BJ (cell line): ENCODE measurements at regions of chr17 and their contacts with region 1.

Region 1: DNA sequence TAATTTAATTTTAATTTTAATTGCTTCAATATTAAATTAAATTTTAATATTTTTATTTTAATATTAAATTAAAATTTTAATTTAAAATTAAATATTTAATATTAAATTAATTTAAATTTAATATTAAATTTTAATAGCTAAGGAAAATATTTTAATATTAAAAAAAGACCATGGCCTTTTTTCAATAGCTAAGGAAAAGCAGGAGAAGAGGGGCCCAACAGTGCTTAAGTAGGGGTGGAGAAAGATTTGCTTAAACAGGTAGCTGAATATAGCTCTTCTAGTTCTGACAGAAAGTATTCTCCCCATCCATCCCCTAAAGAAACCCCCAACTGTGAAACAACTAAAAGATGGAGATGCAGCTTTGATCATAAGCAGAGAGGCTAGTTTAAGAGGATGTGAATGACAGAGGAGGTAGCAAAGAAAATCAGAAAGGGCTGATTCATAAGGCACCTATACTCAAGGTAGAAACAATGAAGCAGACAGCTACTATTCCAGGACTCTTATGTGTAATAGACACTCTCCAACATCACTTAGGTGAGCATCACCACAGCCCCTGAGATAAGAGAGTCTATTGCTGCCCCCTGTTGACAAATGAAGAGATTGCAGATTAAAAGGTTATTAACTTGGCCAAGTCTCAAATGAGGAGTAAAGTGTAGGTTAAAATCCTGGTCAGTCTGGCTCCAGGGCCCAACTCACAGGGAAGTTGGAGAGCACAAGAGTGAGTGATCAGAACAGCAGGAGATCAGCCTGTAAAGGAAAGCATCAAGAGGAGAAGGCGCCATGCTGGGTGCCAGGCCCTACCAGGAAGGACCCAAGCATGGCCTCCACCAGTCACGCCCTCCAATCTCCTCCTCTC is 7.8 kb upstream of the RNASEK start:
- DNase-seq: no peak
- H3K4me3 ChIP-seq: no peak overlapping the region
- H3K27me3 ChIP-seq: no peaks in the 10 kb centered on the region
- CTCF ChIP-seq: peak; percentile 67

Region 2: GRCh38 chr17:6919158-6919557 is 85.5 kb before region 1 on chr17:
- CTCF ChIA-PET with region 1: interaction called, 183 read pairs
- POLR2A ChIA-PET with region 1: interaction called, 6 read pairs
- DNase-seq: no peak
- H3K4me3 ChIP-seq: no peak overlapping the region
- H3K27me3 ChIP-seq: peaks cover 10% of the 10 kb centered on the region
- CTCF ChIP-seq: no peak

Region 3: GRCh38 chr17:7078711-7079110 is 74.1 kb after region 1 on chr17:
- CTCF ChIA-PET with region 1: no interaction called
- POLR2A ChIA-PET with region 1: no interaction called
- DNase-seq: no peak
- H3K4me3 ChIP-seq: no peak overlapping the region
- H3K27me3 ChIP-seq: no peaks in the 10 kb centered on the region
- CTCF ChIP-seq: no peak

Region 4: DNA sequence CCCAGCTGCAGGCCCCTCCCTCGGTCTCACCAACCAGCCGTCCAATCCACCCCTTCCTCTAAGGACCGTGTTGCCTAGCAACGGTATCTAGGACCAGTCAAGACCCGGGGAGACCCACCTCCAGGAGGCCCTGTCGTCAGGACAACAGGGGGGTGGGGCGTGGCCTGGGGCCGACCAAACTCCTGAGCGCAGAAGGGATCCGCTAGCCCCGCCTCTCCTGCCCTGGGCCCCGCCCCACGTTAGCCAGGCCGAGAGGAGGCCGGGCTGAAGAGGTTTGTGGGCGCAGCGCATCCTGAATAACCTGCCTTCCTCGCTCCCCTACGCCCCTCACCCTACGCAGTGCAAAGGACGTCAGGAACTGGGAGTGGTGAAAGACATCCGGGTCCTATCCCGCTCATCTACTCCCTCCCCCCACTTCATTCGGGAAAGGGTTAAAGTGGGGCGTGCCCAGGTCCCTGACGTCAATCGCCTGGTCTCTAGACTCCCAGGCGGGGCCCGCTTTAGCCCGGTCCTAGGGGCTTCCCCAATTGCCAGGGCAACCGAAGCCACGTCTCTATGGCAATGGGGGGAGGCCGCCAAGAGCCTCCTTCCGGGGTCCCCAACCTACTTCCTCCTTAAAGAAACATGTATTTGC is 200.3 kb after region 1 on chr17:
- CTCF ChIA-PET with region 1: no interaction called
- POLR2A ChIA-PET with region 1: no interaction called
- DNase-seq: no peak
- H3K4me3 ChIP-seq: peak overlapping the region; percentile 33
- H3K27me3 ChIP-seq: no peaks in the 10 kb centered on the region
- CTCF ChIP-seq: no peak

Region 5: GRCh38 chr17:7466639-7467341 is 462.2 kb after region 1 on chr17:
- CTCF ChIA-PET with region 1: no interaction called
- POLR2A ChIA-PET with region 1: no interaction called
- DNase-seq: no peak
- H3K4me3 ChIP-seq: no peak overlapping the region
- H3K27me3 ChIP-seq: no peaks in the 10 kb centered on the region
- CTCF ChIP-seq: no peak